ENCODE measurements at regions of chr4 and their contacts with region 1.

Region 1: GRCh38 chr4:183074296-183074990 is 24.6 kb upstream of the WWC2 start:
- DNase-seq: peak in 1 of 2 experiments; percentile 68
- H3K4me3 ChIP-seq: no peak overlapping the region
- H3K27ac ChIP-seq: no peak overlapping the region
- H3K4me1 ChIP-seq: 0 out of 2 replicates have a peak, but pooled peaks cover 8% of the 10 kb centered on the region
- H3K27me3 ChIP-seq: no peaks in the 10 kb centered on the region
- CTCF ChIP-seq: no peak

Region 2: DNA sequence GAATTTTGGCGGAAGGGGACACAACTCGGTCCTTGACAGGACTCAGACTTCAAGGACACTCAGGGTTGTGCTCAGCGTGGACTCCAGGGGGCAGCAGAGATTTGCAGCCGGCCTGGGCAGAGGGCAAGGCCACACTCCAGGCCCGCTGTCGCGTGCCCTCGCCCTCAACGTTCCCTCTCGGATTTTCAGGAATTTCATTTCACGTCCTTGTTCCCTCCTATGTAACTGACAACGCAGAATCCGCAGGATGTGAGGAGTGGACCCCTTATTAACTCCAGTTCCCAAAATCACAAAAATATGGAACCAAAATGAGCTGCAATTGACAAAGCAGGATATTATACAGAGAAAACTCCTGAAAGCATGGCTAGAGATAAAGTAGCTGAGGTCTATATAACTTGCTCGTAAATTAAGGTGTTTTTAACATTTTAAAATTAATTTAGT is 136.2 kb before region 1 on chr4:
- CTCF ChIA-PET with region 1: interaction called, 3 read pairs
- POLR2A ChIA-PET with region 1: no interaction called
- intact Hi-C with region 1: loop called (anchors 1 kb)
- DNase-seq: peak in 1 of 2 experiments; percentile 76
- H3K4me3 ChIP-seq: no peak overlapping the region
- H3K27ac ChIP-seq: no peak overlapping the region
- H3K4me1 ChIP-seq: no peaks in the 10 kb centered on the region
- H3K27me3 ChIP-seq: peaks cover 4% of the 10 kb centered on the region; the same call in 1 of the 2 replicates
- CTCF ChIP-seq: peak; percentile 88

Region 3: DNA sequence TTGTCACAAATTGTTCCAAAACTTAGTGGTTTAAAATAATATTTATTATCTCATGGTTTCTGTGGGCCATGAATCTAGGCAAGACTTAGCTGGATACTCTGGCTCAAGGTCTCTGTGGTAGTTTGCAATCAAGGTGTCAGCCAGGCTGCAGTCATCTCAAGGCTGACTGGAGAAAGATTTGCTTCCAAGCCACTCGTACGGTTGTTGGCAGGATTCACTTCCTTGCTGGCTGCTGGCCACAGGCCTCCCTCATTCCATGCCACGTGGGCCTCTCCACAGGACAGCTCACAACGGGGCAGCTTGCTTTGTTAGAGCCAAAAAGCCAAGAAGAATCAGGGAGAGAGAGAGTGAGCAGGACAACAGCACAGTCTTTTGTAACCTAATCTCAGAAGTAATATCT is 126.0 kb after region 1 on chr4:
- CTCF ChIA-PET with region 1: no interaction called
- POLR2A ChIA-PET with region 1: no interaction called
- intact Hi-C with region 1: loop called (anchors 1 kb)
- DNase-seq: peak; percentile 64 to 70
- H3K4me3 ChIP-seq: no peak overlapping the region
- H3K27ac ChIP-seq: peak overlapping the region; percentile 65
- H3K4me1 ChIP-seq: peaks cover 34% of the 10 kb centered on the region
- H3K27me3 ChIP-seq: no peaks in the 10 kb centered on the region
- CTCF ChIP-seq: no peak

Region 4: GRCh38 chr4:183249857-183250256 is 175.4 kb after region 1 on chr4:
- CTCF ChIA-PET with region 1: interaction called, 11 read pairs
- POLR2A ChIA-PET with region 1: no interaction called
- intact Hi-C with region 1: loop called (anchors 1 kb)
- DNase-seq: peak in 1 of 2 experiments; percentile 31
- H3K4me3 ChIP-seq: no peak overlapping the region
- H3K27ac ChIP-seq: no peak overlapping the region
- H3K4me1 ChIP-seq: no peaks in the 10 kb centered on the region
- H3K27me3 ChIP-seq: no peaks in the 10 kb centered on the region
- CTCF ChIP-seq: peak; percentile 62

Region 5: GRCh38 chr4:183256756-183257385 is 182.4 kb after region 1 on chr4:
- CTCF ChIA-PET with region 1: interaction called, 13 read pairs
- POLR2A ChIA-PET with region 1: interaction called, 11 read pairs
- intact Hi-C with region 1: loop called (anchors 1 kb)
- DNase-seq: peak in 1 of 2 experiments; percentile 27
- H3K4me3 ChIP-seq: no peak overlapping the region
- H3K27ac ChIP-seq: no peak overlapping the region
- H3K4me1 ChIP-seq: no peaks in the 10 kb centered on the region
- H3K27me3 ChIP-seq: no peaks in the 10 kb centered on the region
- CTCF ChIP-seq: peak; percentile 50

Region 6: GRCh38 chr4:183261953-183262775 is 187.7 kb after region 1 on chr4:
- CTCF ChIA-PET with region 1: interaction called, 3 read pairs
- POLR2A ChIA-PET with region 1: no interaction called
- intact Hi-C with region 1: loop called (anchors 1 kb)
- DNase-seq: peak; percentile 43 to 66
- H3K4me3 ChIP-seq: no peak overlapping the region
- H3K27ac ChIP-seq: no peak overlapping the region
- H3K4me1 ChIP-seq: no peaks in the 10 kb centered on the region
- H3K27me3 ChIP-seq: no peaks in the 10 kb centered on the region
- CTCF ChIP-seq: peak; percentile 72

Region 7: DNA sequence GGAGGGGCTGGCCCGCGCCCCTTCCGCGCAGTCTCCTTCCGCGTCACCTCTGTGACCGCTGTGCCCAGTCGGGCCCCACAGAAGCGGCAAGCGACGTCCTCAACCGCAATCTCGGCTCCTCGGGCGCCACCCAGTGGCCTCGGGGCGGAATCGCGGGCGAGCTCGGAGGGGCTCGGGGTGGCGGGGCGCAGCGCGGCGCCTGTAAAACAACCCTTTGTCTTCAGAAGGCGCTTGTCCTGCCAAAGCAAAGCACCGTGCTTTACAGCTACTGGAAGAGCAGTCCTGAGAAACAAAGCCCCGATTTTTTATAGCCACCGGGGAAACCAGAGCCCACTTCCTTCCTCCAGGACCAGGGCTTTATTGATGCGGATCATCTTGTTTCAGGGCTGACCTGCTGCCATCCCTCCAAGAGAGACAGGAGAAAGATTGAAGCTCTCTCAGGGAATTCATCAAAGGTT is 332.7 kb after region 1 on chr4:
- CTCF ChIA-PET with region 1: no interaction called
- POLR2A ChIA-PET with region 1: no interaction called
- intact Hi-C with region 1: loop called (anchors 10 kb)
- DNase-seq: peak; percentile 40 to 85
- H3K4me3 ChIP-seq: peak overlapping the region; percentile 53
- H3K27ac ChIP-seq: no peak overlapping the region
- H3K4me1 ChIP-seq: peaks cover 4% of the 10 kb centered on the region; the same call in 1 of the 2 replicates
- H3K27me3 ChIP-seq: no peaks in the 10 kb centered on the region
- CTCF ChIP-seq: peak; percentile 87